Caco-2 (cell line): ENCODE measurements at regions of chr12 and their contacts with region 1.

Region 1: DNA sequence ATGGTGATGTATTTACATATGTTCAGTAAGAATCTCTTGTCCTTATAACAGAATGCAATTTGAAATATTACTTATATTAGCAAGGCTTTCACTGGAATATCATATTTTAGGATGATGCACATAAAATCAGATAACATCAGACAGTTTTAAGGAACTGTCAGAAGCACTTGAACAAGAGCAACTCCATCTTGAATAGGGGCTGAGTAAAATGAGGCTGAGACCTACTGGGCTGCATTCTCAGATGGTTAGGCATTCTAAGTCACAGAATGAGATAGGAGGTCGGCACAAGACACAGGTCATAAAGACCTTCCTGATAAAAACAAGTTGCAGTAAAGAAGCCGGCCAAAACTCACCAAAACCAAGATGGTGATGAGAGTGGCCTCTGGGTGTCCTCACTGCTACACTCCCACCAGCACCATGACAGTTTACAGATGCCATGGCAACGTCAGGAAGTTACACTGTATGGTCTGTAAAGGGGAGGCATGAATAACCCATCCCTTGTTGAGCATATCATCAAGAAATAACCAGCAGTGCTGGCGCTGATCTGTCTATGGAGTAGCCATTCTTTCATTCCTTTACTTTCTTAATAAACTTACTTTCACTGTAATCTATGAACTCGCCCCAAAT is 27.6 kb upstream of the ETV6 start:
- DNase-seq: peak; percentile 29 to 45
- H3K4me3 ChIP-seq: no peak overlapping the region
- H3K4me3 Mint-ChIP-seq: no peak overlapping the region
- H3K27ac Mint-ChIP-seq: peak overlapping the region; percentile 80
- H3K4me1 ChIP-seq: peaks cover 19% of the 10 kb centered on the region
- H3K4me1 Mint-ChIP-seq: peaks cover 26% of the 10 kb centered on the region
- H3K27me3 ChIP-seq: no peaks in the 10 kb centered on the region
- H3K27me3 Mint-ChIP-seq: no peaks in the 10 kb centered on the region
- CTCF ChIP-seq: peak in 1 of 2 experiments; percentile 35

Region 2: GRCh38 chr12:11607313-11608081 is 14.4 kb before region 1 on chr12:
- CTCF ChIA-PET with region 1: no interaction called
- POLR2A ChIA-PET with region 1: interaction called, 3 read pairs
- intact Hi-C with region 1: loop called (anchors 1 kb)
- DNase-seq: peak; percentile 85 to 86
- H3K4me3 ChIP-seq: no peak overlapping the region
- H3K4me3 Mint-ChIP-seq: peak overlapping the region; percentile 56
- H3K27ac Mint-ChIP-seq: peak overlapping the region; percentile 3
- H3K4me1 ChIP-seq: peaks cover 17% of the 10 kb centered on the region
- H3K4me1 Mint-ChIP-seq: peaks cover 19% of the 10 kb centered on the region
- H3K27me3 ChIP-seq: no peaks in the 10 kb centered on the region
- H3K27me3 Mint-ChIP-seq: no peaks in the 10 kb centered on the region
- CTCF ChIP-seq: no peak

Region 3: DNA sequence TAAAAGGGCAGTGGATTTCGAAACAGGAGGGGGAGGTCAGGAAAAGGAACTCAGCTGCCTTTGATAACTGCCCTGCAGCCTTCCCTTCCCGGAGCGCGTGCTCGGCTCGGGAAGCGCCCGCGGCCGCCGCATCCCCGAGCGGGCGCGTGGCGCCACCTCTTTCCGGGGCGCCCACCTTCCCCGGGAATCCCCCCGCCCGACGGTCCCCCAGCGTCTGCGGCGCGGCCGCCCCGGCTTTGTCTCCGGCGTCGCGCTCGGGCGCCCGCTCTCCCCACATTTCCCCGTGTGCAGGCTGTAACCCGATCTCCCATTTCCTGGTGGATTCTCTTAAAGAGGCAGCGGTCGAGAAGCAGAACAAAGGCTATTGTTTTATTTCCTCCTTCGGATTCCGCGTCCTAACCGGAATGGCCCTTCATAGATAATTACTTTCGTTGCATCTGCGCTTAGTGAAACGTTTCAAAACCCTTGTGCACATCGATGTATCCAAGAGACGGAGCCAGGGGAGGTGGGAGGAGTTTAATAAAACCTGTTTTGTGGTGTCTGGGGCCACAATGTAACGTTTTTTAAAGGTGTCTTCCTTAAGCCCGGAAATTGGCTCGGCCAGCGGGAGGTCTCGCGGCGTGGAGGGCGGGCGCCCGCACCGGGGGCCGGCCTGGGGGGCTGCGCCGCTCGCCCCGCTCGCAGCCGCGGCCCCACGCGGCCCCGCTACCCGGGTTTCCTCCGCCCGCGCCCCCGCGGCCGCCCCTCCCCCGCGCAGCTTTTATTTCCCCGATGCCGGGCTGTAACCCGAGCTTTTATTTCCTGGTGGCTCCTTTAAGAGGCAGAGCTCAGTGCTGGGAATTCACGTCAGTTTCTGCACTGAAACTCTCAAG is 27.2 kb after region 1 on chr12 and contains the start of gene ETV6:
- CTCF ChIA-PET with region 1: no interaction called
- POLR2A ChIA-PET with region 1: no interaction called
- intact Hi-C with region 1: loop called (anchors 1 kb)
- DNase-seq: peak; percentile 78 to 85
- H3K4me3 ChIP-seq: peak within 1 kb of the TSS; percentile 79
- H3K4me3 Mint-ChIP-seq: peak within 1 kb of the TSS; percentile 84
- H3K27ac Mint-ChIP-seq: peak within 1 kb of the TSS; percentile 87
- H3K4me1 ChIP-seq: peaks cover 7% of the 10 kb centered on the region; the same call in 1 of the 2 replicates
- H3K4me1 Mint-ChIP-seq: peaks cover 10% of the 10 kb centered on the region
- H3K27me3 ChIP-seq: no peaks in the 10 kb centered on the region
- H3K27me3 Mint-ChIP-seq: no peaks in the 10 kb centered on the region
- CTCF ChIP-seq: no peak
- total RNA-seq, gene ETV6: 15.6 and 18.2 TPM in 2 replicates

Region 4: DNA sequence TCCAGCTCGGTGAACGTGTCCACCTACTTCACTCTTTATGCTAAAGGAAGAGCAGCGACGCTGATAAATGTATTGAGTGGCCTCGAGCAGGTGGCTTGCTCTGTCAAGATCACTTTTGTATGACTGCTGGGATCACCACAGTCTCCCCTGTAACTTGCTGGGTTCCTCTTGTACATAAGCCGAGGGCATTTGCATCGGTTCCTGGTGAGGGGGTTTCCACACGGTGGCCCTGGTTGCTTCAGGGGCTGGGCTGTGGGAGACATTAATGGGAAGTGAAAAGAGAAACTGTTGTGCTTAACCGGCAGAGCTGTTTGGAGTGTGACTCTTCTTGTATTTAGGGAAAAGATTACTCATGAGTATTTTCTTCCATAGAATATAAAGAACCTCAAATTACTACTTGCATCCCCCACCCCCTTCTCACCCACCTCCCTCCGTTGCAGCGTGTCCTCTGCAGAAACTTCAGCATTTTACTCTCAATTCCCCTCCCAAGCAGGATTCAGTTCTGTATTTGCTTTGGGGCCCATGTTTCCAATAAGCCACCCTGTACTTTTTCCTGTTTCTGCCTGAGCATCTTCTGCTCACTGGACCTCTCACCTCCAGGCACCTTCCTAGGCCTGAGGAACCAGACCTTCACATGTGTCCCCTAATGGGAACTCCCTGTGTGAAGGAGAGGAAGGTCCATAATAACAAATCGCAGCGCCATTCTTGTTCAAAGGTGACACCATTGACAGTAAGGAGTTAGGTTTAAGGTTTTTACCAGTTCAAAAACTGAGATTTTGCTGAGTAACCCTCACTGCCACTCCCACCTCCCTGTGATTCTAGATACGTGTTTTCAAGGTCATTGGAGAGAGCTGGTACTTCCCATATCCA is 214.6 kb after region 1 on chr12:
- CTCF ChIA-PET with region 1: no interaction called
- POLR2A ChIA-PET with region 1: no interaction called
- intact Hi-C with region 1: loop called (anchors 5 kb)
- DNase-seq: no peak
- H3K4me3 ChIP-seq: no peak overlapping the region
- H3K4me3 Mint-ChIP-seq: no peak overlapping the region
- H3K27ac Mint-ChIP-seq: no peak overlapping the region
- H3K4me1 ChIP-seq: no peaks in the 10 kb centered on the region
- H3K4me1 Mint-ChIP-seq: peaks cover 7% of the 10 kb centered on the region
- H3K27me3 ChIP-seq: no peaks in the 10 kb centered on the region
- H3K27me3 Mint-ChIP-seq: no peaks in the 10 kb centered on the region
- CTCF ChIP-seq: no peak